HCT116 (cell line): ENCODE measurements at regions of chr10 and their contacts with region 1.

Region 1: GRCh38 chr10:94630017-94630688 is 53.4 kb upstream of the CYP2C18 start:
- DNase-seq: peak; percentile 24
- ATAC-seq: no peak
- H3K4me3 ChIP-seq: no peak overlapping the region
- H3K27ac ChIP-seq: no peak overlapping the region
- H3K4me1 ChIP-seq: no peaks in the 10 kb centered on the region
- H3K27me3 ChIP-seq: no peaks in the 10 kb centered on the region
- CTCF ChIP-seq: peak; percentile 38 to 69 (median 58); a peak in 5 of 6 replicates
- POLR2A ChIP-seq: no peak
- RAD21 ChIP-seq: peak; percentile 78

Region 2: GRCh38 chr10:94524146-94524545 is 106.0 kb before region 1 on chr10:
- CTCF ChIA-PET with region 1: no interaction called
- POLR2A ChIA-PET with region 1: no interaction called
- RAD21 ChIA-PET with region 1: no interaction called
- intact Hi-C with region 1: no loop called
- DNase-seq: no peak
- ATAC-seq: no peak
- H3K4me3 ChIP-seq: no peak overlapping the region
- H3K27ac ChIP-seq: no peak overlapping the region
- H3K4me1 ChIP-seq: peaks cover 0 to 3% of the 10 kb centered on the region in 2 experiments; a peak in 1 of 4 replicates
- H3K27me3 ChIP-seq: no peaks in the 10 kb centered on the region
- CTCF ChIP-seq: no peak
- POLR2A ChIP-seq: no peak
- RAD21 ChIP-seq: no peak

Region 3: GRCh38 chr10:95176101-95176500 is 545.9 kb after region 1 on chr10:
- CTCF ChIA-PET with region 1: no interaction called
- POLR2A ChIA-PET with region 1: no interaction called
- RAD21 ChIA-PET with region 1: no interaction called
- intact Hi-C with region 1: loop called (anchors 1 kb)
- DNase-seq: no peak
- ATAC-seq: no peak
- H3K4me3 ChIP-seq: no peak overlapping the region
- H3K27ac ChIP-seq: no peak overlapping the region
- H3K4me1 ChIP-seq: no peaks in the 10 kb centered on the region
- H3K27me3 ChIP-seq: no peaks in the 10 kb centered on the region
- CTCF ChIP-seq: peak; percentile 11 to 31 (median 19); a peak in 2 of 6 replicates
- POLR2A ChIP-seq: no peak
- RAD21 ChIP-seq: peak; percentile 53

Region 4: DNA sequence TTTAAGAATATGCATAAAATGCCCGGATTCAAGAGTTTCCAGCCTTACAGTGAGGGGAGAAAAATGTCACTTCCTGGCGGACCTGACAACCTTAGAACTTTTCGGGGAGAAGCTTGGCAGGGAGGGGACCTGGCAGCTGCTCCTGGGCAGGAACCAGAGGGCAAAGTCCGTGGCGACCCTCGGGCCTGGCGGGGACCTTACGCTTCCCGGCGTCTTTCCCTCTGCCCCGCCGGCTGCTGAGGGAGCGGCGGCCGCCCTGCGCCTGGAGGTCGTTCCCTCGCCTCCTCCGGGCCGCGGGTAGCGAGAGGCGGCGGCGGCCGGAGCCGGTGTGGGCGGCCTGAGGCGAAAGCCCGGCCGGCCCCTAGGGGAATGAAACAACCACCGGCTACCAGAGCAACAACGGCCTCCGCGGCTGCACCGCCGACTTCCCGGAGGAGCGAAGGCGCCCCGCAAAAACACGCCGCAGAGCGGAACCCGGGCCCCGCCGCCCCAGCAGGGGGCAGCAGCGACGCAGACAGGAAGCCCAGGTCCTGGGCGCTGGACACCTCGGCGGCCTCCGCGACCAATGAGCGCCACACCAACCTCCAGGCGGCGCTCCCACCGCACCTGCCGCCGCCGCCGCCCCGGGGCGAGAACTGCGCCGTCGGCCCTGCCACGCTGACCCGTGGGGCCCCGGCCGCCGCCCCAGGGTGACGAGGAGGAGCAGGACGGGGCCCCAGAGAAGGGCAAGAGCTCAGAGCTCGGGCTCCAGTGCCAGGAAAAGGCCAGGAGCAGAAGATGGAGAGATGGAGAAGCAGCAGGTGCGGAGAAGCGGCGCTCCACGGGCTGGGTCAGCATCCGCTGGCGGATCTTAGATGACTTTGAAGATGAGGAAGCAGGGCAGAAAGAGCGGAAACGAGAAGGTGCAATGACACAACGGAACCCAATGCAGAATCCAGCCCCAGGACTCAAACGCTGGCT is 553.4 kb after region 1 on chr10:
- CTCF ChIA-PET with region 1: no interaction called
- POLR2A ChIA-PET with region 1: no interaction called
- RAD21 ChIA-PET with region 1: interaction called in 1 of 2 experiments, 3 read pairs
- intact Hi-C with region 1: loop called (anchors 2 kb)
- DNase-seq: peak; percentile 73
- ATAC-seq: peak; percentile 98
- H3K4me3 ChIP-seq: peak overlapping the region; percentile 50 to 67
- H3K27ac ChIP-seq: peak overlapping the region; percentile 49
- H3K4me1 ChIP-seq: peaks cover 0 to 9% of the 10 kb centered on the region in 2 experiments; a peak in 2 of 4 replicates
- H3K27me3 ChIP-seq: no peaks in the 10 kb centered on the region
- CTCF ChIP-seq: peak; percentile 78 to 98 (median 84)
- POLR2A ChIP-seq: no peak
- RAD21 ChIP-seq: peak; percentile 76